ENCODE measurements at regions of chr18 and their contacts with region 1.

Region 1: DNA sequence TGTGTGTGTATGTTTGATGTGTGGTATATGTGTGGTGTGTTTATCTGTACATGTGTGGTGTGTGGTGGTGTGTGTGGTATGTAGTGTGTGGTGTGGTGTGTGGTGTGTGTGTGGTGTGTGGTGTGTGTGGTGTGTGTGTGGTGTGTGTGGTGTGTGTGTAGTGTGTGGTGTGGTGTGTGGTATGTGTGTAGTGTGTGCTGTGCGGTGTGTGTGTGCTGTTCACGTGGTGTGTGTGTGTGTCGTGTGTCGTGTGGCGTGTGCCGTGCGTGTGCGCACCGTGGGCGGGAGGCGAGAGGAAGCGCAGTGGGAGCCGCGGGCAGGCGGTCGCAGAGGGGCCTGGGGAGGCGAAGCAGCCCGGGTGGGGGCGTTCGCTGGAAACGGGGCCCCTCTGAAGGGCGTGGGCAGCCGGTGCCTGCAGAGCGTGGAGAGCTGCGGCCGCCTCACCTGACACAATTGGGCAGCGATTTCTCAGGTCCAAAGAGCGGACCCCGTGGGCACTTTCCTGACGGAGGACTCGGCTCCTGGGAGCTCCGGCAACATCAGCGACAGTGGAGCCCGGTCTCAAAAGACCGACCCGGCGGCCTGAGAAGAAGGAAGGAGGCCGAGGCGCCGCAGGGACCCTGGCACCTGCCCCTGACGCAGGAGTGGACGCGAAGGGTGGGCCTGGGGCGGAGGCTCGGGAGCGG is 741.1 kb upstream of the SALL3 start:
- DNase-seq: no peak
- ATAC-seq: peak in 1 of 4 donors; percentile 39
- H3K4me3 ChIP-seq: no peak overlapping the region
- H3K27ac ChIP-seq: no peak overlapping the region
- H3K4me1 ChIP-seq: no peaks in the 10 kb centered on the region
- H3K27me3 ChIP-seq: no peaks in the 10 kb centered on the region
- CTCF ChIP-seq: no peak
- POLR2A ChIP-seq: no peak

Region 2: GRCh38 chr18:78056011-78056410 is 182.5 kb before region 1 on chr18:
- intact Hi-C with region 1: loop called in 1 of 2 experiments (anchors 10 kb)
- DNase-seq: no peak
- ATAC-seq: no peak
- H3K4me3 ChIP-seq: no peak overlapping the region
- H3K27ac ChIP-seq: no peak overlapping the region
- H3K4me1 ChIP-seq: no peaks in the 10 kb centered on the region
- H3K27me3 ChIP-seq: no peaks in the 10 kb centered on the region
- CTCF ChIP-seq: no peak
- POLR2A ChIP-seq: no peak

Region 3: DNA sequence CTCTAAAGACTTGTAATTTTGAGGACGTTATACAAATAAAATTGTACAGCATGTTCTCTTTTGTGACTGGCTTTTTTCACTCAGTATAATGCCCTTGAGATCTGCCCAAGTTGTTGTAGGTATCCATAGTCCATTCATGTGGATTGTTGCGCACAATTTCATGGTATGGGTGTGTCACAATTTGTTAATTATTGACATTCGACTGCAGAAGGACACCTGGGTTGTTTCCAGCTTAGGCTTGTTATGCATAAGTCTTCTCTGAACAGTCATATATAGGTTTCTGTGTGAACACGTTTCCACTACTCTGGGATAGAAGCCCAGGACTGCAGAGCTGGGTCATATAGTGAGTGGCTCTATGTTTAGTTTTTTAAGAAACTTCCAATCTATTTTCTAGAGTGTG is 59.7 kb before region 1 on chr18:
- intact Hi-C with region 1: loop called in 1 of 2 experiments (anchors 10 kb)
- DNase-seq: no peak
- ATAC-seq: peak in 1 of 4 donors; percentile 64
- H3K4me3 ChIP-seq: no peak overlapping the region
- H3K27ac ChIP-seq: no peak overlapping the region
- H3K4me1 ChIP-seq: no peaks in the 10 kb centered on the region
- H3K27me3 ChIP-seq: no peaks in the 10 kb centered on the region
- CTCF ChIP-seq: no peak
- POLR2A ChIP-seq: no peak

Measured in right lobe of liver (tissue), 6 donors.